ENCODE measurements at regions of chr6 and their contacts with region 1.

Region 1: GRCh38 chr6:134161036-134161435 is 108.6 kb upstream of the SLC2A12 start:
- DNase-seq: no peak
- ATAC-seq: no peak
- H3K4me3 ChIP-seq: no peak overlapping the region
- H3K27ac ChIP-seq: no peak overlapping the region
- H3K4me1 ChIP-seq: no peaks in the 10 kb centered on the region
- H3K27me3 ChIP-seq: no peaks in the 10 kb centered on the region
- CTCF ChIP-seq: no peak

Region 2: DNA sequence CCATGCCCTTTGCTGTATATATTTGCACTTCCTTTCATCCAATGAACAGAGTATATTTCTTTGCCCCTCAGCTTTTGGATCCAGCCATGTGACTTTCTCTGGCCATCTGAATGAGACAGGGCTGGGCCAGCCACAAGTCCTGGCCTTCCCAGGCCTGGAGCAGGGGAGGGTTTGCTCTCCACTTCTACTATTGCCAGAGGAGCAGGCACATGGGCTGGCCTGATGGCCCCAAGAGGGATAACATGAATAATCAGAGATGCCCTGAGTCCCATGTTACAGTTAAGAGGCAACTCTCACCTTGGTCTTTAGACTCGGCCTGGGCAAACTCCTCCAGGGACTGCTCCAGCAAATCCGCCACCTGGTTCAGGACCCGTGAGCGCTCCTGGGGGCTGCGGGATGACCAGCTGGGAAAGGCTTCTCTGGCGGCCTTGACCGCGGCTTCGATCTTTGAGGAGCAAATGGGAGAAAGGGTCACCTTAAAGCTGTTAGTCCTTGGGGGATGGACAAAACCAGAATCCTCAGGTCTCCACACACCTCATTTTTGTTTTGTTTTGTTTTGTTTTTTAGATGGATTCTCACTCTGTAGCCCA is 782.6 kb after region 1 on chr6:
- intact Hi-C with region 1: loop called (anchors 5 kb)
- DNase-seq: no peak
- ATAC-seq: no peak
- H3K4me3 ChIP-seq: no peak overlapping the region
- H3K27ac ChIP-seq: no peak overlapping the region
- H3K4me1 ChIP-seq: no peaks in the 10 kb centered on the region
- H3K27me3 ChIP-seq: no peaks in the 10 kb centered on the region
- CTCF ChIP-seq: no peak